IMR-90 (cell line): ENCODE measurements at regions of chr12 and their contacts with region 1.

Region 1: DNA sequence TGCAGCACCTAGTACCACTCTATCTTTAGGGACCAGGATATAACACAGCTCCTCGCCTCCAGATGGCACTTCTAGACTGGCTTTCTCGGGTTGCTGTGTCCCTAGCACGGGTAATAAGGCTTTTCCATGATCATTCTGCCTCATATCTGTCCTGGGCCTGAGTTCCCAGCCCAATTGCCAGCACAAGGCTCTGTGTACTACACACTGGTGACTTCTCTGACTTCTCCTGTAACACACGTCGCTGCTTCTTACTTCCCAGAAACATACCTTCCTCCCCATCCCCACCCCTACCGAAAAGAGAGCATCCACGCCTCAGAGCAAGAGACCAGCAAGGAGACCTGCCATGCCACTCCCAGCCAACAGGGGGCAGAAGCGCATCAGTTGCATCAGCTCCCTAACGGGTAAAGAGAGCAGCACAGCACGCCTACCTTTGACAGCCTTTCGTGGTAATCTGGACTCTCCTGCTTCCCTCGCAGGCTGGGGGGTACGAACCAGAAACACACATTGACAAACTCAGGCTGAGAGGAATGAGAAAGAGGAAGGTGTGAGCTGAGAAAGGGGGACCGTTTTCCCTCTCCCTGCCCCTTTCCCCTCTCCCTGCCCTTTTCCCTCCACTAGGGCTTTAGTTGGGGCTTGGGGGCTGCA is 21.2 kb upstream of the ZNF740 start:
- DNase-seq: peak; percentile 74
- ATAC-seq: peak; percentile 96
- H3K4me3 ChIP-seq: no peak overlapping the region
- H3K27ac ChIP-seq: peak overlapping the region; percentile 24; the same call in 1 of the 2 replicates
- H3K4me1 ChIP-seq: peaks cover 4% of the 10 kb centered on the region; the same call in 1 of the 2 replicates
- H3K27me3 ChIP-seq: no peaks in the 10 kb centered on the region
- CTCF ChIP-seq: peak; percentile 89
- POLR2A ChIP-seq: no peak
- RAD21 ChIP-seq: peak; percentile 89

Region 2: DNA sequence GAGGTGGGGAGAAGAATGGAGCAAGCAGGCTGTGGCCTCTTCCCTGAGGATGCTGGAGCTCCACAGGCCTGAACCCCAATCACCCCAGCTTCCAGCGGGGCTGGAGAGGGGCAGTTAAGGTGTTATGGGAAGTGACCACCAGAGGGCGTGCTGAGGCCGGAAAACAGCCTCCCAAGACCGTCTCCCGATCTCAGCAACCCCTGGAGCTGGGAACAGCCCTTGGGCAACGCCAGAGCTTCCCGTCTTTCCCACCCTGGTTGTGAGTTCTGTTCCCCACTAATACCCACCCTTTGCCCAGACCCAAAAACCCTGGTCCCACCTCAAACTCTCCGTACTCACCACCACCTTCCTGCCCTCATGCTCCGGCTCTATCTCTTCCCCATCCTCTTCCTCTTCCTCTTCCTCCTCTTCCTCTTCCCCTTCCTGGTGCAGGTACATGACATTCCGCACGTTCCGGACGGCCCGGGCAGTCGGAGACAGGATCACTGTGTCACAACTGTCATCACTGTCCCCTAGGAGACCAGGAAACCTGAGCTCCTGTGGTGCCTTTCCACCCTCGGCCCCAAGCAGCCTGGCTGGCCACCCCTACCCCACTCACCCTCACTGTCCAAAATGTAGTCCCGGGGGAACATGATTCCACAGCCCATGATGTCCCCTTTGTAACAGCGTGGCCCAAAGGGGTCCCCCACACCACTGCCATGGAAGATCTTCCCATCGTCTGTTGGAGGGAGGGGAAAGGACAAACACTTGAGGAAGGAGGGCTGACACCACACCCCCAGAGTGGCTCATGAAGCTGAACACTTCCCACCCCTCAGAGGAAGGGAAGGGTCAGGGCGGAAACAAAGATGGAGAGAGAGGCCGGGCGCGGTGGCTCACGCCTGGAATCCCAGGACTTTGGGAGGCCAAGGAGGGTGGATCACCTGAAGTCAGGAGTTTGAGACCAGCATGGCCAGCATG is 93.1 kb before region 1 on chr12:
- CTCF ChIA-PET with region 1: interaction called, 11 read pairs
- POLR2A ChIA-PET with region 1: no interaction called
- dilution Hi-C with region 1: no loop called
- in situ Hi-C with region 1: no loop called
- intact Hi-C with region 1: no loop called
- DNase-seq: peak; percentile 81
- ATAC-seq: peak; percentile 70
- H3K4me3 ChIP-seq: no peak overlapping the region
- H3K27ac ChIP-seq: peak overlapping the region; percentile 45
- H3K4me1 ChIP-seq: peaks cover 32% of the 10 kb centered on the region
- H3K27me3 ChIP-seq: no peaks in the 10 kb centered on the region
- CTCF ChIP-seq: peak; percentile 94
- POLR2A ChIP-seq: no peak
- RAD21 ChIP-seq: peak; percentile 95

Region 3: DNA sequence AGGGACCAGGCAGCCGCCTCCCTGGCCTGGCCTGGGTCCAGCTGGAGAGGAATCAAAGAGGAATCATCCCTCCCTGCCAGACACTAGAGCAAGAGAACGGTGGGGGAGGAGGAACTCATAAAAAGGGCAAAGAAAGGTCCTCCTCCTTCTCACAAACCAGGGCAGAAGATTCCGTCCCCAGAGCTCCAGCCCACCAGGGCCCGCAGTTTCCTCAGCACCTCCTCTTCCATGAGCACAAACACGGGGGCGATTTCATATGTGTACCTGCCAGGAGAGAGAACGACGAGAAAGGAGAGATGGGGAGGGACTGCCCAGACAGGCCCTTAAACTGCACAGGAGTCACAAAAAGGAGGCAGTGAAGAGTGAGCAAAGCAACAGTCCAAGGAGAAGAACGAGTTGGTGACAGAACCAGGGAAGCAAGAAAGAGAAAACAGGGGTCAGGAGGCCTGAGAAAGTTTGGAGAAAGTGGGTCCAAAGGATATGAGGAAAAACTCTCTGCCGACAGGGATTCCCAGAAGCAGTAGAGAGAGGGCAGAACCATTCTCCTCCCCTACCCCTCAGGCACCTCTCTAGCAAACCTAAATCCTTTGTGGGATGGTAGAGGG is 12.5 kb after region 1 on chr12:
- CTCF ChIA-PET with region 1: interaction called, 6 read pairs
- POLR2A ChIA-PET with region 1: interaction called, 28 read pairs
- dilution Hi-C with region 1: no loop called
- in situ Hi-C with region 1: no loop called
- intact Hi-C with region 1: no loop called
- DNase-seq: no peak
- ATAC-seq: no peak
- H3K4me3 ChIP-seq: no peak overlapping the region
- H3K27ac ChIP-seq: no peak overlapping the region
- H3K4me1 ChIP-seq: peaks cover 19% of the 10 kb centered on the region
- H3K27me3 ChIP-seq: no peaks in the 10 kb centered on the region
- CTCF ChIP-seq: no peak
- POLR2A ChIP-seq: no peak
- RAD21 ChIP-seq: no peak

Region 4: DNA sequence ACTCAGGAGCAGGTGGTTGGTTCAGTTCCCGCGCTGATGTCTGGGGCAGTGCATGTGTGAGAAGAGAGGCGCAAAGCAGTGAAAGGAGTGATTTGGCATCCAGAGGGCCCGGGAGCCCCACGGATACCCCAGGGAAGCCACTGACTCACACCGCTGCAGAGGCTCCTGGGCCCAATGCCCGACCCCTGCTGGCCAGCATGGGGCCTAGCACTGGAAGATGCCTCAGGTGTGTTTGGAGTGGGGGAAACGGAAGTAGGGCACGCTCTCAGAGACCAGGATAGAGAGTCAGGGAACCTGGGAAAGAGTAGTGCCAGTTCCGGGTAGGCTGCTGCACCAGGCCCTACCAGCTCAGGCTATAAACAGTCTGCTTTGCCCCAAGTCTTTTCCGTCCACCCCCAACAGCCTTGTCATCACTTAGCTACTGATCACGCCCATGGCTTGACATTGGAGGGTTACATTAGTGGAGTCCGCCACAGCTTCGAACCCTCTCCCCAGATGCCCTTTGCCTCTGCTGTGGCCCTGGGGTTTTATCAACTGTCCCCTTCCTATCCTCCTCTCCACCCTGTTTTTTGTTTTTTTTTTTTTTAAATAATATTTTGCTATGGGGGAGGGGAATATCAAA is 30.9 kb after region 1 on chr12:
- CTCF ChIA-PET with region 1: interaction called, 3 read pairs
- POLR2A ChIA-PET with region 1: no interaction called
- dilution Hi-C with region 1: no loop called
- in situ Hi-C with region 1: no loop called
- intact Hi-C with region 1: loop called (anchors 1 kb)
- DNase-seq: peak; percentile 59
- ATAC-seq: peak; percentile 90
- H3K4me3 ChIP-seq: no peak overlapping the region
- H3K27ac ChIP-seq: no peak overlapping the region
- H3K4me1 ChIP-seq: no peaks in the 10 kb centered on the region; the same call in 1 of the 2 replicates
- H3K27me3 ChIP-seq: no peaks in the 10 kb centered on the region
- CTCF ChIP-seq: peak; percentile 70
- POLR2A ChIP-seq: no peak
- RAD21 ChIP-seq: peak; percentile 59

Region 5: GRCh38 chr12:53198486-53199110 is 39.3 kb after region 1 on chr12:
- CTCF ChIA-PET with region 1: interaction called, 16 read pairs
- POLR2A ChIA-PET with region 1: no interaction called
- dilution Hi-C with region 1: no loop called
- in situ Hi-C with region 1: no loop called
- intact Hi-C with region 1: loop called (anchors 1 kb)
- DNase-seq: no peak
- ATAC-seq: no peak
- H3K4me3 ChIP-seq: no peak overlapping the region
- H3K27ac ChIP-seq: no peak overlapping the region
- H3K4me1 ChIP-seq: no peaks in the 10 kb centered on the region
- H3K27me3 ChIP-seq: peaks cover 2% of the 10 kb centered on the region; the same call in 1 of the 2 replicates
- CTCF ChIP-seq: no peak
- POLR2A ChIP-seq: no peak
- RAD21 ChIP-seq: no peak

Region 6: GRCh38 chr12:53295070-53295890 is 136.0 kb after region 1 on chr12 and contains the start of gene PFDN5:
- CTCF ChIA-PET with region 1: interaction called, 6 read pairs
- POLR2A ChIA-PET with region 1: no interaction called
- dilution Hi-C with region 1: no loop called
- in situ Hi-C with region 1: no loop called
- intact Hi-C with region 1: loop called (anchors 5 kb)
- DNase-seq: peak; percentile 92
- ATAC-seq: peak; percentile 83
- H3K4me3 ChIP-seq: peak within 1 kb of the TSS; percentile 92
- H3K27ac ChIP-seq: peak within 1 kb of the TSS; percentile 95
- H3K4me1 ChIP-seq: peaks cover 20% of the 10 kb centered on the region
- H3K27me3 ChIP-seq: no peaks in the 10 kb centered on the region
- CTCF ChIP-seq: no peak
- POLR2A ChIP-seq: peak; percentile 92
- RAD21 ChIP-seq: no peak
- total RNA-seq, gene PFDN5: 764 and 1,011 TPM in 2 replicates

Region 7: DNA sequence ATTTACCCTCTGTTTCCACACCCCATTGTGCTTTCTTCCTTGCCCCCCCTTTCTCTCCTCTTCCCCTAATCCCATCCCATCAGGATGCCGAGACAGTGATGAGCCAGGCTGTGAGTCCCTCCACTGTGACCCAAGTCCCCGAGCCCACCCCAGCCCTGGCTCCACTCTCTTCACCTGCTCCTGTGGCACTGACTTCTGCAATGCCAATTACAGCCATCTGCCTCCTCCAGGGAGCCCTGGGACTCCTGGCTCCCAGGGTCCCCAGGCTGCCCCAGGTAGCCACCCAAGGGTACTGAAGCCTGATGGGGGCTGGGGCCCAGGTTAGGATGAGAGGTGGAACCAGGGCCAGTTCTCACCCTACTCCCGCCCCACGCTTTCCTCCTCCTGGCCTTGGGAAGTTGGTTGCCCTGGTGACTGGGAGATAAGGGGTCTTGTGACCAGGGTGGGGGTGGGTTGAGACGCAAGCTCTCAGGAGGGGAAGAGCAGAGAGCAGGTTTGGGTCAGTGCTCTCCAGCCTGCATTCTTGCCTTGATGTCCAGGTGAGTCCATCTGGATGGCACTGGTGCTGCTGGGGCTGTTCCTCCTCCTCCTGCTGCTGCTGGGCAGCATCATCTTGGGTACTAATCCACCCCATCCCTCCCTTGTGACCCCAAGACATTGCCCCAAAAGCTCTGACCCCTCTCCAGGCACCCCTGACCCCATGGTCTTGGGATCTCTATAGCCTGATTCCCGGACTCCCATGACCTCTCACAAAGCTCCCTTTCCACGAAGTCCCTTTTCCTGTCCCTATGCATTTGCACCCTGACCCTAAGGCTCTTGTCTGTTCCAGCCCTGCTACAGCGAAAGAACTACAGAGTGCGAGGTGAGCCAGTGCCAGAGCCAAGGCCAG is 265.6 kb after region 1 on chr12:
- CTCF ChIA-PET with region 1: no interaction called
- POLR2A ChIA-PET with region 1: no interaction called
- dilution Hi-C with region 1: no loop called
- in situ Hi-C with region 1: no loop called
- intact Hi-C with region 1: no loop called
- DNase-seq: no peak
- ATAC-seq: no peak
- H3K4me3 ChIP-seq: no peak overlapping the region
- H3K27ac ChIP-seq: no peak overlapping the region
- H3K4me1 ChIP-seq: peaks cover 7% of the 10 kb centered on the region
- H3K27me3 ChIP-seq: peaks cover 10% of the 10 kb centered on the region; the same call in 1 of the 2 replicates
- CTCF ChIP-seq: no peak
- POLR2A ChIP-seq: no peak
- RAD21 ChIP-seq: no peak